WTC11 (cell line): ENCODE measurements at regions of chr5 and their contacts with region 1.

Region 1: DNA sequence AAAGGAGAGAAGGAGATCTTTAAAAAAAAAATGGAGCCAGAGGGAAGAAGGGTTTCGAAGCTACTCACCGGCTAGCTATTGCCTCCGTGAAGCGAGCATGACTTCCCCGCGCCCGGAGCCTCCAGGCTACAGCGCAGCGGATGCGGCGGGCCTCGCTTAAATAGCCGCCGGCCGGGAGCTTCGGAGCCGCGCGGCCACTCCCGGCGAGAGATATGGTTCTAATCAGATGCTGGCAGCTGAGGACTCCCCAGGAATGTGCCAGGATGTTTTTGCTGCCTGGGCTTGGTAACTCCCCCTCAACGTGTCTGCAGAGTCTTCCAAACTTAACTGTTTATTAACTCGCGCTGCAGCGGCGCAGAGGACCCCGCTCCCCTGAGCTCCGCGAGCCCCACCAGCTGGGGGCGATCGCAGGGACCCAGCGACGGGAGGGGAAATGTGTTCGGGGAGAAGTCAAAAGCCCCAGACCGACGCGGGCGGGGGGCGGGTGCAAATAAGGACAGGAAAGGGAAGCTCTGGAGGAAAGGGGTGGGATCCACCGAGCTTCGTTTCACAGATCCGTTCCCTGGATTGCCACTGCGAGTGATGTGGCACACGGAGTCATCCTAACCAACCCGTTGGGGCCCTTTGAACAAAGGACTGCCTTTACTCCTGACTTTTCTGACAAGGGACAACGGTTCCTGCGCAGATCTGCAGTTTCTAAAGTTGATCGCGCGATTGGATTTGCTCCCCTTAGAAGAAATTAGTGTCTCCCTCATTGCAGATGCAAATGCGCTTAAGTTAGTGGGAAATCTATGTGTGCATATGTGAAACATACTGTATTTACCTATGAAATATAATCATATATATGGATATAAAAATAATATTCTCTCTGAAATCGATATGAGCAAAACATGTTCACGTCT is at the start of gene DAB2:
- DNase-seq: peak; percentile 85
- ATAC-seq: peak; percentile 88
- H3K4me3 Mint-ChIP-seq: peak within 1 kb of the TSS; percentile 82
- H3K27ac Mint-ChIP-seq: peak within 1 kb of the TSS; percentile 27; the same call in 1 of the 2 replicates
- H3K4me1 Mint-ChIP-seq: peaks cover 54% of the 10 kb centered on the region
- H3K27me3 Mint-ChIP-seq: peaks cover 5% of the 10 kb centered on the region; the same call in 1 of the 2 replicates
- CTCF ChIP-seq: no peak
- total RNA-seq, gene DAB2: 3.8 to 7.2 TPM (median 3.9 TPM) in 3 replicates

Region 2: DNA sequence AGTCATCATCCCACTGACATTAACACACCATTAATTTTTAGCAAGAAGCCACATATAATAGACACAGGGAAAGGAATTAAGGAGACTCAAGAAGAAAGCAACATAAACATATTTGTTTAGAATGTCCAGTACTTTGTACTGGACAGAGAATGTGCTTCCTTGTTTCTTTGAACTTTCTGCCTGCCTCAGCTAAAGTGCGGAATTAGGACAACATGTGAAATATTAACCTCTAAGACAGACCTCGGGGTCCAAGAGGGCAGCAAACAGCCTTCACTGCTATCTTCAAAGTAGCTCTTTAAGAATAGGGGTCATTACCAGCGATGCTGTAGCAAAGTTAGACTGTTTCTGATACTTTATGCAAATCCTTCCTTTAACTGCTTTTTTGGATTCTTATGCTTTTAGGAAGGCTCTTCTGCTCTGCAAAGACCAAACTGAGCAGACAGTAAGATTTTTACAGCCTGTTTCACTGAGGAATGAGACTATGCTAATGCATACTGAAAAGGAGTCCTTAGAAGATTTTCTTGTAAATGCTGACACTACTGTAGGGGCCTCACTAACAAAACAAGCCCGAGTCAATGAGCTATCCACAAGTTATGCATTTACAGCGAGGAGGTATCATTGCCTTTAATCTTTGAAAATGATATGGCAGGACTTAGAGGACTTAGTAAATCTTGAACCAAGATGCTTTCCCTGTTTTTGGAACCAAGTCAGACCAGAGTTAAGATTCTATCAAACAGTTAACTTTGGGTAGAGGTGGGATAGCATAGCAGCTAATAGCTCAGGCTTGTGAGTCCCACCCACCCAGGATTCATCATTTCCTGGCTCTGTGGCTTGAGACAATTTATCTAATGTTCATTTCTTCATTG is 24.0 kb before region 1 on chr5:
- CTCF ChIA-PET with region 1: interaction called, 11 read pairs
- POLR2A ChIA-PET with region 1: interaction called, 3 read pairs
- DNase-seq: no peak
- ATAC-seq: no peak
- H3K4me3 Mint-ChIP-seq: no peak overlapping the region
- H3K27ac Mint-ChIP-seq: no peak overlapping the region
- H3K4me1 Mint-ChIP-seq: peaks cover 19% of the 10 kb centered on the region; the same call in 1 of the 2 replicates
- H3K27me3 Mint-ChIP-seq: no peaks in the 10 kb centered on the region
- CTCF ChIP-seq: no peak

Region 3: DNA sequence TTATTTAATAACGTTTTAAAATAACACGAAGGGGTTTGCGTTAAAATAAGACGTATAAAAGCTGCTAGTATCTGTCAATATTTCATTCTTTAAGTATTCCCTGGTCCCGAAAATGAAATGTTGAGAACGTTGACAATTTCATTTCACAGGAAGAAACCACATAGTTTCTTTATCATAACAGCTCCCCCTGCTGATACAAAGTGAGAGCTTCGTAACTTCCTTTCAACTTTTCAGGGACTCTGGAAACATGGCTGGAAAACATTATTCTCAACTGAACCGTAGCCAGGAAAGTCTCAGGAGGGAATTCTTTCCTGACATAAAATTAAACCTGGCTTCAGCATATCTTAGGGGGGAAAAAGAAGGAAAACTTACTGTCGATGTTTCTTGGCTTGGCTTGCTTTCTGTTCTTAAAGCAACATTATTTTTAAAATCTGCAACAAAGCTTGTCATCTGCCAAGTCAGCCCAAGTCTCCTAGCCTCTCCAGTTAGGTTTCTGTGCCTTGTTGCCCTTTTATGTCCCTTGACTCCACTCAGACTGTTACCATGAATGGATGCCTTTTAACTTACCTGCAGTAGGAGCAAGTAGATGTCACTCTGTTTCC is 122.7 kb after region 1 on chr5:
- CTCF ChIA-PET with region 1: interaction called, 23 read pairs
- POLR2A ChIA-PET with region 1: no interaction called
- DNase-seq: no peak
- ATAC-seq: peak; percentile 47; the same call in 1 of the 2 replicates
- H3K4me3 Mint-ChIP-seq: no peak overlapping the region
- H3K27ac Mint-ChIP-seq: no peak overlapping the region
- H3K4me1 Mint-ChIP-seq: no peaks in the 10 kb centered on the region
- H3K27me3 Mint-ChIP-seq: no peaks in the 10 kb centered on the region
- CTCF ChIP-seq: peak; percentile 34; the same call in 1 of the 2 replicates

Region 4: DNA sequence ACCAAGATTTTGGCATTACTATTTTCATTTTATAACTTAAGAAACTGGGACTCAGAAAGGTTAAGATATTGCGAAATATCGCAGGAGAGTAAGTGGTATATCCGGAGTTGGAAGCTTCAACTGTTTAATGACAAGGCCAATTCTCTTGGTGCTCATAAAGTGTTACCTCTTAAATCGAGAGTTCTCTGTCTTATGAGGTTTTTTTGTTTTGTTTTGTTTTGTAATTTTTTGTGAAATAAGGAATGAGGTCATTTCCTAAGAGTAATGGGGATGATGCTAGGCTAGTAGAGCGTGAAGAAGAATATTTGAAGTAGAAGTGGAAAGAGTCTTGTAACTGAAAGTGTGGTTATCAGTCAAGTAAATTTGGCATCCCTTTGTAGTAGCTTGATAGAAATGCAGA is 183.0 kb after region 1 on chr5:
- CTCF ChIA-PET with region 1: no interaction called
- POLR2A ChIA-PET with region 1: no interaction called
- DNase-seq: no peak
- ATAC-seq: no peak
- H3K4me3 Mint-ChIP-seq: no peak overlapping the region
- H3K27ac Mint-ChIP-seq: no peak overlapping the region
- H3K4me1 Mint-ChIP-seq: no peaks in the 10 kb centered on the region
- H3K27me3 Mint-ChIP-seq: no peaks in the 10 kb centered on the region
- CTCF ChIP-seq: no peak